Activated T-helper 1 cell treated with anti-CD3 and anti-CD28 coated beads, Interleukin-12 subunit alpha, Interleukin-12 subunit beta, Interleukin-2, Interleukin-4 antibody, amounts not matched to agents 30 ng/mL and 10 ng/mL and 1 ng/mL, durations not matched to agents 14 hours and 24 hours and 36 hours (primary cell): ENCODE measurements at regions of chr12 and their contacts with region 1.

Region 1: DNA sequence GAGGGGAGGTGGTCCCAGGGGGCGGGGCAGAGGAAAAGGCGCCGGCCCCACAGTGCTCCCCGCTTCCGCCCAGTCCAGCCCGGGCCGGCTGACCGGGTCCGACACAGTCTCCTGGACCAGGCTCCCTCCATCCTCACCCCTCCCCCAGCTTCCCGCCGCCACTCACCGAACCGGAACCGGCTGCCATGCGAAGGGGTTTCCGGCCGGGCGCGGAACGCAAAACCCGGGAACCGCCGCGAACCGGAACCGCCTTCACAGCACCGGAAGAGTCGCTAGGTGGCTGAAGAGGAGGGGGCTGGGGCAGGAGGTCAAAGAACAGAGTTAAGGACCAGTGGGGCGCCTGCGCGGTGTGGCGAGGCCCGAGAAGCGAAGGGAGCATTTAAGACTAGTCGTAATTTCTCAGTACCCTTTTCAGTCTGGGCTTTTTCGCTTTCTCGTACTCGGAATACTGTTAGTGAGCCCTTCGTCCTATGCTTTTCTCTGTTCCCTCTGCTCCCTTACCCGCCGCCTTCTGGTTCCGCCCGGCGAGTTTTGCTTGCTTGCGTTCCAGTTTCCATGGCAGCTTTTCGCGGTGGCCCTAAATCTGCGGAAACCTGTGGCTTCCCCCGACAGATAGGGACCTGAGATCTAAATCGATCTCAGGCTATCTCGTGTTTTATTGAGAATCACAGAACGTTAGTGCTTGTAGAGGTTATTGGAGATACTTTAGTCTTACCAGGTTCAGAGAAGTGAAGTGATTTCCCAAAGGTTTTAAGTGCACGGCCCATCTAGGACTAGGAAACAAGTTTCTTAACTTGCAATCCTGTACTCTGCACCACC is at the start of gene SENP1:
- DNase-seq: peak; percentile 87
- H3K4me3 Mint-ChIP-seq: peak within 1 kb of the TSS; percentile 97
- H3K27ac Mint-ChIP-seq: peak within 1 kb of the TSS; percentile 96
- H3K4me1 Mint-ChIP-seq: peaks cover 48% of the 10 kb centered on the region
- H3K27me3 Mint-ChIP-seq: peaks cover 5% of the 10 kb centered on the region
- total RNA-seq, gene SENP1: 51.3 and 52.2 TPM in 2 replicates

Region 2: GRCh38 chr12:47904713-47905310 is 201.3 kb before region 1 on chr12 and contains the start of gene VDR:
- intact Hi-C with region 1: loop called (anchors 2 kb)
- DNase-seq: peak; percentile 62
- H3K4me3 Mint-ChIP-seq: peak within 1 kb of the TSS; percentile 100
- H3K27ac Mint-ChIP-seq: peak within 1 kb of the TSS; percentile 99
- H3K4me1 Mint-ChIP-seq: peaks cover 53% of the 10 kb centered on the region
- H3K27me3 Mint-ChIP-seq: peaks cover 34% of the 10 kb centered on the region
- total RNA-seq, gene VDR: 305 and 318 TPM in 2 replicates

Region 3: DNA sequence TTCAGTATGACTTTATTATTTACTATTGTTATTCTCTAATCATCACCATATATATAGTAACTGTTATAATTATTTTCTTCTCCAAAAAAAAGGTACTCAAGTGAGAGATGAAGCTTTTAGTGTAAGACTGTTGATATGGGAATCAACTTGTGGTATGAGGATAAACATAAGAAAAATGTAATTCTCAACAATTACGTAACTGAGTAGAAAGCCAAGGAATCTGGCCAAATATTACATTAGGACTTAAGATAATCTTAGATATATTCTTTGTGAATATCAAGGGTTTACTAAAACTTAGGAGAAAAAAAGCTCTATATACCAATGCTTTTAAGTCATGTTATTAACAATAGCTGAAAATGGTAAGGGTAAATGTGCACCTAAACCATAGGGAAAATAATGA is 13.5 kb before region 1 on chr12:
- intact Hi-C with region 1: no loop called
- DNase-seq: no peak
- H3K4me3 Mint-ChIP-seq: no peak overlapping the region
- H3K27ac Mint-ChIP-seq: no peak overlapping the region
- H3K4me1 Mint-ChIP-seq: no peaks in the 10 kb centered on the region
- H3K27me3 Mint-ChIP-seq: no peaks in the 10 kb centered on the region

Region 4: DNA sequence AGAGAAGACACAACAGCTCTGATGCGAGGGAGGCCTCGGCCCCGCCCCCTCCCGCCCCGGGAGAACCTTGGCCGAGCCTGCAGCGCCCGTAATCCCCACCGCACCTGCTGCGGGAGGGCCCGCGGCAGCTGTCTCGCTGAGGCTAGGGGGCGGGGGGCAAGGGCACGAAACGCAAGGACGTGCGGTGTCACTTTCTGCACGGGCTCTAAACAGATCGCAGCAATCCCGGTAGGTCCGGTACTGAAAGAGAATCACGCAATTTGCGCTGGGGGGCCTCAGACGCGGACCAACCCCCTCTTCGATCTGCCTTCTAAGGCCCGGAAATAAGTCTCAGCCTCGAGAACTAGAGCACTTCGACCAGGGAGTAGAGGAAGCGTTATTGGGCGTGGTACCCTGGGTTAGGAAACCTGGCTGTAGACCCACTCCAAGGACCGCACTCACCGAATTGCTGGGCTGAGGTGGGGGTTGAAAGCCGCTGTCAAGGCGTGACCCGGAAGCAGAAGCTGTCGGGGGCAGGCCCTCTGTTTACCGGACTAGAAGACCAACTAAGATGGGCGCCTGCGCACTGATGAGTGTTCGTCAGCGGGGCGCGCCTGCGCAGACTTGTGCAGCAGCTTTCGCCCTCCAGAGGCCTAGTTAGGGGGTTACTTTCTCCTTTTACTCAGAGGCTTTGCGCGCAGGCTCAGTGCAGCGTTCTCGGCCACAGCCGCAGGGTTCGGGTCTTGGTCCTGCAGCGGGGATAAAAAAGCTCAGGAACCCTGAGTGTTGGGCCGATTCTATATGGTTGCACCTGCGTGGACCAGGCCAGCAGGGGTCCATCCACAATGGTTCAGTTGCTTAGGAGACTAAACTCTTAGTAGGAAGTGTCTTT is 51.2 kb after region 1 on chr12 and contains the start of gene ASB8:
- intact Hi-C with region 1: loop called (anchors 1 kb)
- DNase-seq: peak; percentile 98
- H3K4me3 Mint-ChIP-seq: peak within 1 kb of the TSS; percentile 94
- H3K27ac Mint-ChIP-seq: peak within 1 kb of the TSS; percentile 86
- H3K4me1 Mint-ChIP-seq: peaks cover 21% of the 10 kb centered on the region
- H3K27me3 Mint-ChIP-seq: no peaks in the 10 kb centered on the region
- total RNA-seq, gene ASB8: 33.3 and 36.1 TPM in 2 replicates

Region 5: DNA sequence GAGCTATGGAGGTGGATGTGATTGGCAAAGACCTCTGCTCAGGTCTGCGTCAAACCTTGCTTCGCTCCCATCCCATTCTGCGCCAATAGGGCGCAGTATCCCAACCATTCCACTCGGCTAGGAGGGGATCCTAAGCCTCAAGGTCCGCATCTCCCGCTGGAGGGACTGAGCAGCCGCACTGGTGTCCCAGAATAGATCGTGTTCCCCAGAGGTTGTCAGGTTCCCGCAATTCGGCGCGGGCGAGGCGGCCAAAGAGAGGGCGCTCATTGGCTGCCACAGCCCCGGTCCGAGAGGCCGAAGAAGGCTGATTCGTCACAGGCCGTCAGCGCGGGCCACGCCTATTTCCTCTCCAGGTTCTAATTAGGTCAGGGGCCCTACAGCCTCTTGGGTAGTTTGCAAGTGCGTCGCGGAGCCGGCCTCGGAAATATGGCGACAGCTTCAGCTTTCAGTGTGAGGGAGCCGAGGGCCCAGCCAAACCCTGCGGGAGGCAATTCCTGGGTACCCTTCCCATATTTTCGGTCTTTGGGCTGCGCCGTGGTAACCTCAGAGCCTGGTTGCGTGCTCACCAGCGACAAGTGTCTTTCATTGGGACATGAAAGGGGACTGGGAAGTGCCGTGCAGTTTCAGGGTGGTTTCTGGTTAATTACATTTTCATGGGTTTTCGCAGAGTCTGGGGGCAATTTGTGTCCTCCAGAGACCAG is 92.0 kb after region 1 on chr12:
- intact Hi-C with region 1: loop called (anchors 1 kb)
- DNase-seq: peak; percentile 90
- H3K4me3 Mint-ChIP-seq: peak overlapping the region; percentile 88
- H3K27ac Mint-ChIP-seq: peak overlapping the region; percentile 86
- H3K4me1 Mint-ChIP-seq: peaks cover 44% of the 10 kb centered on the region
- H3K27me3 Mint-ChIP-seq: peaks cover 21% of the 10 kb centered on the region

Region 6: DNA sequence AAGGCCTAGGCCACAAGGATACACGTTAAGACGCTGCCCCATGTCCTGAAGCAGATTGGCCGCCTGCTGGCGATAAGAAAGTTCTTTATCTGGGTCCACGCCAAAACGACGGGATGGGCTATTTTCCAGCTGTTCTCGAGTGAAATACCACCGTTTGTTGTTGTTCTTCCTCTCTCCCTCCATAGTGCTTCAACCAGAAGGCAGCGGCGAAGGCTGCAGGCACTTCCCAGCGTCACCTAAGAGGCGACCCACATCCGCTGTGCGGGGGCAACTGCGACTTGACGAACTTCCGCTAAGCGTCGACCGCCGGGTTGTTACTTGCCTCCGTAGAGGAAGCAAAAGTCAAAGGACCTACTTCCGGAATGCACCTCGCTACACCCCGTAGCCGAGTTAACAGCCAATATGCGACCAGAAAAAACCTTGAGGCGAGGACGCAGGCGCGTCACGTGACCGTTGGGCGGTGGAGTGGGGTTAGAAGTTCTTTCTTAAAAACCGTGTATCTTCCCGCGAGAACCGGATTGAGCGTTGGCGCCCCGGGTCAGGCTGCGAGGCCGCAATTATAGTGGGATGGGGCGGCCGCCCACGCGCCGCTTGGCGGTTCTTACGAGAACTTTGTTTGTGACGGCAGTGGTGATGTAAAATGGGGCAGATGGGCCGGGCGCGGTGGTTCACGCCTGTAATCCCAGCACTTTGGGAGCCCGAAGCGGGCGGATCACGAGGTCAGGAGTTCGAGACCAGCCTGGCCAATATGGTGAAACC is 610.6 kb after region 1 on chr12 and contains the start of gene CCNT1:
- intact Hi-C with region 1: loop called (anchors 2 kb)
- DNase-seq: peak; percentile 99
- H3K4me3 Mint-ChIP-seq: peak within 1 kb of the TSS; percentile 90
- H3K27ac Mint-ChIP-seq: peak within 1 kb of the TSS; percentile 93
- H3K4me1 Mint-ChIP-seq: peaks cover 43% of the 10 kb centered on the region
- H3K27me3 Mint-ChIP-seq: no peaks in the 10 kb centered on the region
- total RNA-seq, gene CCNT1: 67.2 and 67.7 TPM in 2 replicates